Activated CD4-positive, alpha-beta memory T cell treated with anti-CD3 and anti-CD28 coated beads for 36 hours (primary cell): ENCODE measurements at regions of chr10 and their contacts with region 1.

Region 1: DNA sequence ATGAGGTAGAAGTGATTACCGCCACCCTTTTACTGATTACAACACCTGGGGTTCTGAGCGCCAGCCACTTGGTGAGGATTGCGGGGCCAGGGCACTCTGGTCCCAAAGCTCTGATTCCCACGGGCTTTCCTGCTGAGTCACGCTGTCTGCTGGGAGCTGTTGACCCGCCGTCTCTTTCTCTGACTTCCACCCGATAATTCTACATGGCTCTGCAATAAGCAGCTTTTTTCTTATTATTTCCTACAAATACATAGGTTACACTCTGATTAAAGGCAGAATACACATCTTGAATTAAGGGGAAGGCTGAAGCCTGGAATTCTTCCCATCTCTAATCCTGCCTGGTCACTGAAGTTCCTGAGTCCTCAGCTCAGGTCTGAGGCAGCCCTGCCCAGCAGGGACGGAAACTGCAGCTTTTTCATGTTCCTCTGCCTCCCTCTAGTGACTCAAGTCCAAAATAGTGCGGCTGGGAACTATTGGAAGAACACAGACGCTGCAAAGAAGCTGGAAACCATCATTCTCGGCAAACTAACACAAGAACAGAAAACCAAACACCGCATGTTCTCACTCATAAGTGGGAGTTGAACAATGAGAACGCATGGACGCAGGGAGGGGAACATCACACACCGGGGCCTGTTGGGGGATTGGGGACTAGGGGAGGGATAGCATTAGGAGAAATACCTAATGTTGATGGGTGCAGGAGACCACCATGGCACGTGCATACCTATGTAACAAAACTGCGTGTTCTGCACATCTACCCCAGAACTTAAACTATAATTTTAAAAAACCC is 178.3 kb downstream of the PRKCQ start:
- DNase-seq: peak; percentile 71
- H3K4me3 Mint-ChIP-seq: peak overlapping the region; percentile 9
- H3K27ac Mint-ChIP-seq: peak overlapping the region; percentile 35
- H3K4me1 Mint-ChIP-seq: peaks cover 42% of the 10 kb centered on the region
- H3K27me3 Mint-ChIP-seq: peaks cover 3% of the 10 kb centered on the region

Region 2: GRCh38 chr10:6108603-6109443 is 292.9 kb before region 1 on chr10:
- CTCF ChIA-PET with region 1: interaction called, 41 read pairs
- POLR2A ChIA-PET with region 1: interaction called, 3 read pairs
- intact Hi-C with region 1: loop called (anchors 1 kb)
- DNase-seq: peak; percentile 36
- H3K4me3 Mint-ChIP-seq: no peak overlapping the region
- H3K27ac Mint-ChIP-seq: peak overlapping the region; percentile 76
- H3K4me1 Mint-ChIP-seq: peaks cover 36% of the 10 kb centered on the region
- H3K27me3 Mint-ChIP-seq: no peaks in the 10 kb centered on the region

Region 3: GRCh38 chr10:6171881-6172695 is 229.7 kb before region 1 on chr10:
- CTCF ChIA-PET with region 1: interaction called, 19 read pairs
- POLR2A ChIA-PET with region 1: no interaction called
- intact Hi-C with region 1: no loop called
- DNase-seq: peak; percentile 54
- H3K4me3 Mint-ChIP-seq: no peak overlapping the region
- H3K27ac Mint-ChIP-seq: peak overlapping the region; percentile 26
- H3K4me1 Mint-ChIP-seq: peaks cover 76% of the 10 kb centered on the region
- H3K27me3 Mint-ChIP-seq: no peaks in the 10 kb centered on the region

Region 4: DNA sequence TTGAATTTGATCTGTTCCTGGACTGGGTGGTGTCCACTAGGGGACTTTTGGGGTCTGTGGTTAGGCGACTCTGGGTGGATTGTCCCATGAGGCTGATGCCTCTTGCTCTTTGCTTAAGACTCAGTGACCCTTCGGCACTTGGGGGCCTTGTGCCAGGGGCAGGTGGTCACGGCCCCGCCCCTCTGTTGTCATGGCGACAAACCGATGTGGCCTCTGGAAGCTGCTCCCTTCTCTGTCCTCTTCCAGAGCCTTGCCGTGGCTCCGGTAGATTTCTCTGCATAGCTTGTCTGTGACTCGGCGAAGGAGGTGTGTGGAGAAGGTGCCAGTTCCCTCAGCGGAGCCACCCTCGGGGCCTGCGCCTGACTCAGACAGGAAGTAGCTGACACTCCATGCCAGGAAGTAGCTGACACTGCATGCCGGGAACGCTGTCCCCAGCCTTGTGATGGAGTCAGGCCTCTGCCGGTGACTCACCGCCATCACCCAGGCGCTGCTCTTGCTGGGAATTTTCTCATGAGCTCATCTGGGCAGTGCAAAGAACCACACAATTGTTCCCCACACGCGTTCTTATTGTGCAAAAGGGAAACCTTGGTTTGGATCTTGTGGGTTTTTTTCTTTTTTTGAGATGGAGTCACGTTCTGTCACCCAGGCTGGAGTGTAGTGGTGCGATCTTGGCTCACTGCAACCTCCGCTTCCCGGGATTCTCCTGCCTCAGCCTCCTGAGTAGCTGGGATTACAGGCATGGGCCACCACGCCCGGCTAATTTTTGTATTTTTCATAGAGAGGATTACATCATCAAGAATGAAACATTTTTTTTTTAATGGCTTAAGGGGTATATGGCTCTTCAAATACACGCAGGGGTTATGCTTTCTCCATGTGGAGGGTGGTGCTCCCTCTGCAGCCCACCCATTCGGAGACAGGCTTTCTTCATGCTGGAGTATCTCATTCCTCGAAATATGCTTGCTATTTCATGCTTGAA is 126.4 kb before region 1 on chr10:
- CTCF ChIA-PET with region 1: interaction called, 10 read pairs
- POLR2A ChIA-PET with region 1: interaction called, 3 read pairs
- intact Hi-C with region 1: loop called (anchors 1 kb)
- DNase-seq: peak; percentile 97
- H3K4me3 Mint-ChIP-seq: peak overlapping the region; percentile 70
- H3K27ac Mint-ChIP-seq: peak overlapping the region; percentile 97
- H3K4me1 Mint-ChIP-seq: peaks cover 62% of the 10 kb centered on the region
- H3K27me3 Mint-ChIP-seq: no peaks in the 10 kb centered on the region

Region 5: GRCh38 chr10:6348096-6348874 is 53.5 kb before region 1 on chr10:
- CTCF ChIA-PET with region 1: interaction called, 18 read pairs
- POLR2A ChIA-PET with region 1: interaction called, 14 read pairs
- intact Hi-C with region 1: loop called (anchors 2 kb)
- DNase-seq: peak; percentile 93
- H3K4me3 Mint-ChIP-seq: peak overlapping the region; percentile 73
- H3K27ac Mint-ChIP-seq: peak overlapping the region; percentile 99
- H3K4me1 Mint-ChIP-seq: peaks cover 57% of the 10 kb centered on the region
- H3K27me3 Mint-ChIP-seq: no peaks in the 10 kb centered on the region

Region 6: GRCh38 chr10:6507311-6507710 is 105.6 kb after region 1 on chr10:
- CTCF ChIA-PET with region 1: no interaction called
- POLR2A ChIA-PET with region 1: no interaction called
- intact Hi-C with region 1: no loop called
- DNase-seq: peak; percentile 73
- H3K4me3 Mint-ChIP-seq: no peak overlapping the region
- H3K27ac Mint-ChIP-seq: peak overlapping the region; percentile 88
- H3K4me1 Mint-ChIP-seq: peaks cover 76% of the 10 kb centered on the region
- H3K27me3 Mint-ChIP-seq: no peaks in the 10 kb centered on the region

Region 7: GRCh38 chr10:6678211-6678803 is 276.6 kb after region 1 on chr10:
- CTCF ChIA-PET with region 1: interaction called, 10 read pairs
- POLR2A ChIA-PET with region 1: no interaction called
- intact Hi-C with region 1: no loop called
- DNase-seq: peak; percentile 76
- H3K4me3 Mint-ChIP-seq: no peak overlapping the region
- H3K27ac Mint-ChIP-seq: no peak overlapping the region
- H3K4me1 Mint-ChIP-seq: peaks cover 4% of the 10 kb centered on the region
- H3K27me3 Mint-ChIP-seq: peaks cover 6% of the 10 kb centered on the region